Mammary epithelial cell (primary cell): ENCODE measurements at regions of chr7 and their contacts with region 1.

Region 1: DNA sequence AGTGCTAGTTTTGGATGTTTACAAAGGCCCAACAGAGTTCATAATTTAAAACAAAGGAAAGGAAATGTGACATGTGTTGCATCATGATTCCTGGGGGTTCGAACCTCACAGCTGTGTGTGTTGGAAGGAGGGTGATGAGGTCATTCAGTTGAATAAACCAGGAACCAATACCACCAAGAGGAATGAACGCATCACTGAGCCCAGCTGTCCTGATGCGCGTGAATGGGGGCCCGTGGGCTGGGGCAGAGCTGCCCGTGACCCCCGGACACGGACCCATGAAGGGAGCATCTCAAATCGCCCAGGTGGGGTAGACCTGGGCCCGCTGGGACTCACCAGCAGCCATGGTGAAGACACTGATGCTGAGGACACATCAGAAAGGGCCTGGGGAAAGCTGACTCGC is 33.0 kb downstream of the BRI3 start:
- DNase-seq: no peak
- H3K4me3 ChIP-seq: no peak overlapping the region
- H3K27ac ChIP-seq: no peak overlapping the region
- H3K4me1 ChIP-seq: peaks cover 3% of the 10 kb centered on the region
- H3K27me3 ChIP-seq: no peaks in the 10 kb centered on the region
- CTCF ChIP-seq: no peak

Region 2: DNA sequence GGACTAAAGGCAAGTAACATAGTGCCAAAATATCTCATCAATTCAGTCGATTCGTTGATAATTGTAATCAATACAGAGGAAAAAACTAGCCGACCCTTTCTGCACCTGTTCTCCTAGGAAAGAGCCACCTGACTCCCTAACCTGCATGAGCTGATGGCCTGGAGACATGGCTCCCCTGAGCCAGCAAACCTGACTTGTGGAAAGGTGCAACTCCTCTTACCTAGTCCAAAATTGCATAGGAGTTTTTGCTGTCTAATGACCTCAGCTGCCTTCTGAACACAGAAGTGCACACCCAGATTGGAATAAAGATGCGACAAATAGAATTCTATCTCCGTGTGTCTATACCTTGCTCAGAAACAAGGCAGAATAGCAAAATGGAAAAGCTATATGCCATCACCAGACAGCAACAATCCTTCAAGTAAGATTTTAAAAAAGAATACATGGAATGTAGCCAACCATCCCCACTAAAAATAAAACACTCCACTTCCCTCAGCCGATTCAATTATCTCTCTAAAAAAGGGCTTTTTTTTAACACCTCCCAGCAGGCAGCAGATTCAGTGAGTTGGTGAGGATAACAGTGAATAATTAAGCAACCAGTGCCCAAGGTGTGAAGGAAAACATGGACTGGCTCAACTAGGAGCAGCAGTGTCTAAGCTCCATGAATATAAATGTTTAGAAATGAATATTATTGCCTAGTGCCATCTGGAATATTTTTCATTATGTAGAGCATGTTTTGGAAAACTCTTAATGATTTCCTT is 234.4 kb before region 1 on chr7:
- CTCF ChIA-PET with region 1: no interaction called
- dilution Hi-C with region 1: no loop called
- in situ Hi-C with region 1: no loop called
- intact Hi-C with region 1: no loop called
- DNase-seq: no peak
- H3K4me3 ChIP-seq: no peak overlapping the region
- H3K27ac ChIP-seq: no peak overlapping the region
- H3K4me1 ChIP-seq: no peaks in the 10 kb centered on the region
- H3K27me3 ChIP-seq: no peaks in the 10 kb centered on the region
- CTCF ChIP-seq: no peak

Region 3: DNA sequence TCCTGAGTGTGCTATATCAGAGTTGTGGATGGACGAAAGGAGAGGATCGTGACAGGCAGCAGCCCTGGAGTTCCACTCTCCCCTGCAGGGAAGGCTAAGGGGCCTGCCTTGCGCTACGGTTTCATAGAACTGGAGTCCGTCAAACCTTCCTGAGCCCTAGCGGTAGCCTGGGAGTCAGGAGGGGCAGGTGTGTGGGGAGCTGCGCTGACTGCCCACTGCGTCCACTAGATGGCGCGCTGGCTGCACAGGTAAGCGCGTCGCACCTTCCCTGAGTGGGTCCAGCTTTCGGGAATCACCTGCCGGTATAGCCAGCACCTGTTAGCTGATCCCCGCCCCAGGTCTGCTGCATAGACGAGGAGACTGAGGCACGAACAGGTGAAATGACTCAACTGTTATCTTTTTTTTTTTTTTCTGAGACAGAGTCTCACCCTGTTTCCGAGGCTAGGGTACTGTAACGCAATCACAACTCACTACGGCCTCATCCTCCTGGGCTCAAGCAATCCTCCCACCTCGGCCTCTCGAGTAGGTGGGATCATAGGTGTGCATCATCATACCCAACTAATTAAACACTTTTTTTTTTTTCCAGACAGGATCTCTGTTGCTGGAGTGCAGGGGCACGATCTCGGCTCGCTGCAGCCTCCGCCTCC is 106.6 kb after region 1 on chr7:
- CTCF ChIA-PET with region 1: no interaction called
- dilution Hi-C with region 1: no loop called
- in situ Hi-C with region 1: loop called in 1 of 2 experiments (anchors 5 kb)
- intact Hi-C with region 1: no loop called
- DNase-seq: peak; percentile 75
- H3K4me3 ChIP-seq: no peak overlapping the region
- H3K27ac ChIP-seq: no peak overlapping the region
- H3K4me1 ChIP-seq: peaks cover 31% of the 10 kb centered on the region
- H3K27me3 ChIP-seq: no peaks in the 10 kb centered on the region
- CTCF ChIP-seq: peak; percentile 99 to 100